PC-9 (cell line): ENCODE measurements at regions of chr1 and their contacts with region 1.

Region 1: DNA sequence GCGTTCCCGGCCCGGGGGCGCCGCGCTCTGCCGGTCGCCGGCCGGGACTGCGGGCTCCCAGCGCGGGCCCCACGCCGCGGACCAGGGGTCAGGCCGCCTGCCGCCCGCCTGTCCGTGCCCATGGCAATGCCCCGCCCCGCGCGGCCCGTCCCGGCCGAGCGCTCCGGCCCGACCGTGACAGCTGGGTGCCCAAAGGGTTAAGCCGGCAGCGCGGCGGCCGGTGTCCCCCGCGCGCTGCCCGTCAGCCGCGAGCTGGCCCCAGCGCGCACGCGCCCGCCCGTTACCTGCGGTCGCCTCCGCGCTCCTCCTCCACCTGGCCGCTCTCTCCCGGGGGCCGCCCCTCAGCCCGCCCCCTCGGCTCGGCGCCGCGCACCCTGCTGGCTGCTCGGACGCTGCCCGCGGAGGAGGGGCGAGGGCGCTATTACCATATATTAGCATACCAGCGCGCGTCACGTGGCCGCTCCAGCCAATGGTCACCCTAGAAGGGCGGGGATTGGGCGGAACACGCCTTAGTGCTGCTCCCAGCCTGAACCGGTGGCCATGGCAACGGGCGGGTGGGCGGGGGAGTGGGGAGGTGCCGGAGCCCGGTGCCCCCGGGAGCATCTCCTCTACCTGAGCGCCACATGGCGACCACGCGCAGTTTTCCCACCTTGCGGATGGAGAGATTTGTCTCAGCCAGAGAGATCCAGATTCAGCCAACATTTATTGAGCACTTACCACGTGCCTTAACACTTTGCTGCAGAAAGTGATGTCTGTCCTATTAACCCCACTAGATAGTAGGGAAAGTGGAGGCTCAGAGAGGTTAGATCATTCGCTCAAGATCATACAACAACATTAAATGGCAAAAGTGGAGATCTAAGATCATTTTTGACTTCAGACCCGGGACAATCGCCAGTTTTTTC is at the start of gene PHC2:
- DNase-seq: peak; percentile 91 to 97
- H3K4me3 ChIP-seq: peak within 1 kb of the TSS; percentile 86
- H3K27ac ChIP-seq: peak within 1 kb of the TSS; percentile 80
- H3K4me1 ChIP-seq: peaks cover 70% of the 10 kb centered on the region
- H3K27me3 ChIP-seq: no peaks in the 10 kb centered on the region
- CTCF ChIP-seq: no peak; the same call in 1 of the 2 replicates
- total RNA-seq, gene PHC2: 45.4 and 48.1 TPM in 2 replicates

Region 2: DNA sequence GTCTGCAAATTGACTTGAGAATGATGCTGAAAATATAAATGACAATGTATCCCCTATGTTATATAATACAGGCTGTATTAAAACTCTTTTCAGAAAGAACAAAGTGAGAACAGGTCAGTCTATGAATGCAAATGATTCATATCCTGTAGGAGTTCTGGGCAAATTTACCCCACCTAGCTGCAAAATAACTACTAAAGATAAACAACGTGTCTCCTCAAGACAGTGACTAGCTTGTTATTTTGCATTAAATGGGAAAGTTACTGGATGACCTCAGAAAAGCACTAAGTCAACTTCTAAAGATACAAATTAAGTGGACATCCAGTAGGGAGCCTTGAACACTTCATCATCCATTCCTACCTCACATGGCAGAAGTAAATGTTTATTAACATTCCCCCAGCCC is 477.4 kb before region 1 on chr1:
- CTCF ChIA-PET with region 1: no interaction called
- POLR2A ChIA-PET with region 1: interaction called, 10 read pairs
- intact Hi-C with region 1: no loop called
- DNase-seq: peak in 1 of 2 experiments; percentile 79
- H3K4me3 ChIP-seq: no peak overlapping the region
- H3K27ac ChIP-seq: peak overlapping the region; percentile 88
- H3K4me1 ChIP-seq: peaks cover 28% of the 10 kb centered on the region
- H3K27me3 ChIP-seq: no peaks in the 10 kb centered on the region
- CTCF ChIP-seq: no peak

Region 3: DNA sequence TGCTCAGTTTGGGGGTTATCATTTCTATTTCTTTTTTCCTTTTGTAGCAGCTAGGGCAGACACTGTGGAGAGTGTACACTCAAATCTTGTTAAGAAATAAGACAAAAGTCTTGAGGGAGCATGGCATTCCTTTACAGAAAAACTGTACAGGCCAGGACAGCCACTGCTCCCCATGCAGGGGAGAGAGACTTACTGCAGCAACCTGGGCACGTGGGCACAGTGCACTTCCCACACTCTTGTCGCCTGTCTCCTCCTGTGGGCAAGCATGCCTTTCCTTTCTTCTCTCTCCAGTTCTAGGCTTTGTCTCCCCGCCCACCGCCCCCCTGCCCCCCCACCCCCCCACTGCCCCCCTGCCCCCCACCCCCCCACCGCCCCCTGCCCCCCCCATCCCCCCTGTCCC is 52.0 kb before region 1 on chr1:
- CTCF ChIA-PET with region 1: no interaction called
- POLR2A ChIA-PET with region 1: no interaction called
- intact Hi-C with region 1: loop called (anchors 5 kb)
- DNase-seq: no peak
- H3K4me3 ChIP-seq: no peak overlapping the region
- H3K27ac ChIP-seq: no peak overlapping the region
- H3K4me1 ChIP-seq: peaks cover 33% of the 10 kb centered on the region
- H3K27me3 ChIP-seq: no peaks in the 10 kb centered on the region
- CTCF ChIP-seq: no peak